Activated naive CD4-positive, alpha-beta T cell treated with anti-CD3 and anti-CD28 coated beads for 36 hours (primary cell): ENCODE measurements at regions of chr12 and their contacts with region 1.

Region 1: GRCh38 chr12:122951979-122952892 is 14.0 kb downstream of the ABCB9 start:
- DNase-seq: peak; percentile 87
- H3K4me3 Mint-ChIP-seq: no peak overlapping the region
- H3K27ac Mint-ChIP-seq: no peak overlapping the region
- H3K4me1 Mint-ChIP-seq: peaks cover 6% of the 10 kb centered on the region
- H3K27me3 Mint-ChIP-seq: no peaks in the 10 kb centered on the region

Region 2: DNA sequence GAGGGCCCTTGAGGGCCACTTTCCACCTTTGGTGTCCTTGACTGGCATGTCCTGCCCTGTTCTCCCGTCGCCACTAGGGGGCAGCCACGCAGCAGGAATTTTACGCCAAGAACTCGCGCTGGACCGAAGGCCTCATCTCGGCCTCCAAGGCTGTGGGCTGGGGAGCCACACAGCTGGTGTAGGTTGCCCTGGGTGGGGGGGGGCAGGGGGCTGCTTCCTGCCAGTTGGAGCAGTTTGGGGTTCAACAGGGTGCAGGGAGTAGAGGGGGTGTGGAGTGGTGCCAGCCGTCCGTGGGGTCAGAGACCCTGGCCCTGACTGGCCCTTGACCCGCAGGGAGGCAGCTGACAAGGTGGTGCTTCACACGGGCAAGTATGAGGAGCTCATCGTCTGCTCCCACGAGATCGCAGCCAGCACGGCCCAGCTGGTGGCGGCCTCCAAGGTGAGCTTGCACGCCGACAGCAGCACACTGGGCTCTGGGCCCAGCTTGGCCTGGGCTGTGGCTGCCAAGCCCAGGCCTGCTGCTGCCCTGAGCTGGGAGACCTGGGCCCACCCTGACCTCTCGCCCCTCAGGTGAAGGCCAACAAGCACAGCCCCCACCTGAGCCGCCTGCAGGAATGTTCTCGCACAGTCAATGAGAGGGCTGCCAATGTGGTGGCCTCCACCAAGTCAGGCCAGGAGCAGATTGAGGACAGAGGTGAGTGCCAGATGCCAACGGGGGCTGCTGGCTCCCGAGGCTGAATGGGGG is 91.7 kb before region 1 on chr12:
- CTCF ChIA-PET with region 1: interaction called, 185 read pairs
- intact Hi-C with region 1: loop called (anchors 1 kb)
- DNase-seq: peak; percentile 91
- H3K4me3 Mint-ChIP-seq: no peak overlapping the region
- H3K27ac Mint-ChIP-seq: no peak overlapping the region
- H3K4me1 Mint-ChIP-seq: no peaks in the 10 kb centered on the region
- H3K27me3 Mint-ChIP-seq: no peaks in the 10 kb centered on the region

Region 3: GRCh38 chr12:122880668-122881067 is 71.6 kb before region 1 on chr12:
- CTCF ChIA-PET with region 1: interaction called, 54 read pairs
- intact Hi-C with region 1: loop called (anchors 1 kb)
- DNase-seq: peak; percentile 71
- H3K4me3 Mint-ChIP-seq: no peak overlapping the region
- H3K27ac Mint-ChIP-seq: peak overlapping the region; percentile 9
- H3K4me1 Mint-ChIP-seq: peaks cover 78% of the 10 kb centered on the region
- H3K27me3 Mint-ChIP-seq: peaks cover 44% of the 10 kb centered on the region

Region 4: DNA sequence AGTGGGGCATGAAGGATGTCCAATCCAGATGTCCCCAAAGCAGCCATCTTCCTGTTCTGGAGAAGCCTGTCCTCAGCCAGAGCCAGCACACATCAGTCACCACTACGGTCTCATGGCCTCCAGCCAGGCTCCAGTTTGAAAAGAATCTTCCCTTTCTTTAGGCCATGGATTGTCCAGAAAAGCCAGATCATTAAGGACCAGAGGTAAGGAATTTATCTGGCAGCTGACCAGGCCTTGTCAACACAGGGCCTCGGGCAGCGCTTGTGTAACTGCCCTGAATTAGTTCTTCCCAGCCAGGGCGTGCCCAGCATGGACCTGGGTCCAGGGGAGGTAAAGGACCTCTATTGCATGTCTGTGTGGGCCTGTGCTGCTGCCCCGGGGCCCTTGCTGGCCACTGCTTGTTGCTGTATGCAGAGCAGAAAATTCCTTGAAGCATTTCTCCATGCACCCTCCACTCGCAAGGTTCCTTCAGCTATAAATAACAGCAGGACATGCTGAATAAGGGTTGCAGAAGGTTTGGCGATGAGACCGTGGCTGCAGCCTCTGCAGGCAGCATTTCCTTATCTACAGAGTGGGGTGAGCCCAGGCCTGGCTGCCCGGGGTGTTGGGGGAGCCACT is 34.6 kb before region 1 on chr12:
- CTCF ChIA-PET with region 1: no interaction called
- intact Hi-C with region 1: no loop called
- DNase-seq: no peak
- H3K4me3 Mint-ChIP-seq: no peak overlapping the region
- H3K27ac Mint-ChIP-seq: no peak overlapping the region
- H3K4me1 Mint-ChIP-seq: peaks cover 4% of the 10 kb centered on the region
- H3K27me3 Mint-ChIP-seq: no peaks in the 10 kb centered on the region

Region 5: GRCh38 chr12:122980183-122981046 is 28.2 kb after region 1 on chr12 and contains the start of gene ARL6IP4:
- CTCF ChIA-PET with region 1: no interaction called
- intact Hi-C with region 1: no loop called
- DNase-seq: peak; percentile 65
- H3K4me3 Mint-ChIP-seq: peak within 1 kb of the TSS; percentile 81
- H3K27ac Mint-ChIP-seq: peak within 1 kb of the TSS; percentile 84
- H3K4me1 Mint-ChIP-seq: peaks cover 62% of the 10 kb centered on the region
- H3K27me3 Mint-ChIP-seq: no peaks in the 10 kb centered on the region
- total RNA-seq, gene ARL6IP4: 159 to 177 TPM

Region 6: GRCh38 chr12:123305136-123305535 is 352.9 kb after region 1 on chr12:
- CTCF ChIA-PET with region 1: no interaction called
- intact Hi-C with region 1: no loop called
- DNase-seq: no peak
- H3K4me3 Mint-ChIP-seq: no peak overlapping the region
- H3K27ac Mint-ChIP-seq: peak overlapping the region; percentile 44
- H3K4me1 Mint-ChIP-seq: no peaks in the 10 kb centered on the region
- H3K27me3 Mint-ChIP-seq: no peaks in the 10 kb centered on the region